ENCODE measurements at regions of chr9 and their contacts with region 1.

Region 1: GRCh38 chr9:127734747-127735529 is at the start of gene TOR2A:
- DNase-seq: peak; percentile 92
- ATAC-seq: peak; percentile 93
- H3K4me3 ChIP-seq: peak within 1 kb of the TSS; percentile 58 to 72
- H3K27ac ChIP-seq: peak within 1 kb of the TSS; percentile 87
- H3K4me1 ChIP-seq: peaks cover 4 to 18% of the 10 kb centered on the region in 2 experiments
- H3K27me3 ChIP-seq: no peaks in the 10 kb centered on the region
- CTCF ChIP-seq: peak in 2 of 3 experiments; percentile 91 to 92; a peak in 4 of 6 replicates
- POLR2A ChIP-seq: no peak
- RAD21 ChIP-seq: no peak
- total RNA-seq, gene TOR2A: 12.0 TPM

Region 2: DNA sequence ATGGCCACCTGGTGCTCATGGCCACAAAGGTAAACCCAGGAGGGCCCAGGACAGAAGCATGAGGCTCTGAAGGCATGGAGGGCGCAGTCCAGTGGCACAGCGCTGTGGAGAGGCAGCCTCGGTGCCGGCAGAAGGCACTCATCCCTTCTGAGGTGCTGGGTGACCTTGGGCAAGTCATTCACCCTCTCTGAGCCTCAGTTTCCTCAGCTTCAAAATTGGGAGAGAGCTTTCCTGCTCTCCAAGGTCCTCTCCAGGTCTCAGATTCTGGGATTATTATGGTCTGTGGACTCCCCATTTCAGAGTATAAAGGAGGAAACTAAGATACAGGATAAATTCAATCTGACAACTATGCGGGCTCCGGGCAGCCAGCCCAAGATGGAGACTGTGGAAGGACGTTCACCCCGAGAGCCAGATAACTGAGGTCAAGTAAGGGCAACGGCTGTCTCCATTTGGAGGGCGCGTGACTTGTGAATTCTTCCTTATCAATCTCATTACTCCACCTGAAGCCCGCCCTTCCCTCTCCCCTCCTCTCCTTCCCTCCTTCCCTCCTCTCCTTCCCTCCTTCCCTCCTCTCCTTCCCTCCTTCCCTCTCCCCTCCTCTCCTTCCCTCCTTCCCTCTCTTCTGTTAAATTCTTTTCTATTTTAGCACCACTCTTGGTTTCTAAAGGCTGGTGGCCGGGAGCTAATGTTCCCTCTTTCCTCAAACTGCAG is 225.5 kb before region 1 on chr9:
- CTCF ChIA-PET with region 1: no interaction called
- POLR2A ChIA-PET with region 1: no interaction called
- RAD21 ChIA-PET with region 1: no interaction called
- intact Hi-C with region 1: no loop called
- DNase-seq: no peak
- ATAC-seq: no peak
- H3K4me3 ChIP-seq: no peak overlapping the region
- H3K27ac ChIP-seq: no peak overlapping the region
- H3K4me1 ChIP-seq: 0 out of 4 replicates have a peak, but pooled peaks cover 0 to 1% of the 10 kb centered on the region in 2 experiments
- H3K27me3 ChIP-seq: no peaks in the 10 kb centered on the region
- CTCF ChIP-seq: no peak
- POLR2A ChIP-seq: no peak
- RAD21 ChIP-seq: no peak

Region 3: GRCh38 chr9:127586537-127586936 is 148.4 kb before region 1 on chr9:
- CTCF ChIA-PET with region 1: interaction called, 46 read pairs
- POLR2A ChIA-PET with region 1: interaction called, 3 read pairs
- RAD21 ChIA-PET with region 1: interaction called, 5 to 10 read pairs
- intact Hi-C with region 1: loop called (anchors 1 kb)
- DNase-seq: no peak
- ATAC-seq: peak; percentile 88
- H3K4me3 ChIP-seq: no peak overlapping the region
- H3K27ac ChIP-seq: no peak overlapping the region
- H3K4me1 ChIP-seq: peaks cover 5 to 24% of the 10 kb centered on the region in 2 experiments; a peak in 3 of 4 replicates
- H3K27me3 ChIP-seq: no peaks in the 10 kb centered on the region
- CTCF ChIP-seq: peak in 2 of 3 experiments; percentile 82 to 87; a peak in 4 of 6 replicates
- POLR2A ChIP-seq: no peak
- RAD21 ChIP-seq: no peak

Region 4: GRCh38 chr9:127707726-127708147 is 27.2 kb before region 1 on chr9:
- CTCF ChIA-PET with region 1: interaction called, 6 read pairs
- POLR2A ChIA-PET with region 1: no interaction called
- RAD21 ChIA-PET with region 1: interaction called, 3 read pairs
- intact Hi-C with region 1: loop called (anchors 1 kb)
- DNase-seq: peak; percentile 43
- ATAC-seq: peak; percentile 80
- H3K4me3 ChIP-seq: no peak overlapping the region
- H3K27ac ChIP-seq: no peak overlapping the region
- H3K4me1 ChIP-seq: peaks cover 6 to 17% of the 10 kb centered on the region in 2 experiments; a peak in 3 of 4 replicates
- H3K27me3 ChIP-seq: no peaks in the 10 kb centered on the region
- CTCF ChIP-seq: peak in 2 of 3 experiments; percentile 42 to 43; a peak in 4 of 6 replicates
- POLR2A ChIP-seq: no peak
- RAD21 ChIP-seq: no peak

Region 5: DNA sequence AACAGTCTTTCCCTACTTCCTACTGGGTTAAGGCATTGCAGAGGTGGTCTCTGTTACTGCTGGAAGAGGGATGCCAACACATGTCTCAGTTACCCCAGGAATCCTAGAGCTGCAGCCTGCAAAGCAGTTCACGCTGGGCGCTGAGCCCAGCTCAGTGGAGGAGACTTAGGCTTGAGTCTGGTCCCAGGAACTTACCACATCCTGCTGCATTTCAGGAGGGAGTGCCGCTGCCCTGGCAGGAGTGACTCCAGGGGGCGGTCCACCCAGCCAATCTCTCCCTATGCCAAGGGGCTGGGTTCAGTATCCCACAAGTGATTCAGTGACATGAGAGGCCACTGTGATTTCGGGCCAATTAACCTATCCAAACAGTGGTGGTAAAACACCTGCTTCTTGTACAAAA is 11.5 kb before region 1 on chr9:
- CTCF ChIA-PET with region 1: interaction called, 23 read pairs
- POLR2A ChIA-PET with region 1: interaction called, 6 read pairs
- RAD21 ChIA-PET with region 1: interaction called in 1 of 2 experiments, 5 read pairs
- intact Hi-C with region 1: no loop called
- DNase-seq: no peak
- ATAC-seq: no peak
- H3K4me3 ChIP-seq: no peak overlapping the region
- H3K27ac ChIP-seq: peak overlapping the region; percentile 50; the same call in 1 of the 2 replicates
- H3K4me1 ChIP-seq: peaks cover 54 to 62% of the 10 kb centered on the region in 2 experiments
- H3K27me3 ChIP-seq: no peaks in the 10 kb centered on the region
- CTCF ChIP-seq: no peak
- POLR2A ChIP-seq: no peak
- RAD21 ChIP-seq: no peak

Region 6: DNA sequence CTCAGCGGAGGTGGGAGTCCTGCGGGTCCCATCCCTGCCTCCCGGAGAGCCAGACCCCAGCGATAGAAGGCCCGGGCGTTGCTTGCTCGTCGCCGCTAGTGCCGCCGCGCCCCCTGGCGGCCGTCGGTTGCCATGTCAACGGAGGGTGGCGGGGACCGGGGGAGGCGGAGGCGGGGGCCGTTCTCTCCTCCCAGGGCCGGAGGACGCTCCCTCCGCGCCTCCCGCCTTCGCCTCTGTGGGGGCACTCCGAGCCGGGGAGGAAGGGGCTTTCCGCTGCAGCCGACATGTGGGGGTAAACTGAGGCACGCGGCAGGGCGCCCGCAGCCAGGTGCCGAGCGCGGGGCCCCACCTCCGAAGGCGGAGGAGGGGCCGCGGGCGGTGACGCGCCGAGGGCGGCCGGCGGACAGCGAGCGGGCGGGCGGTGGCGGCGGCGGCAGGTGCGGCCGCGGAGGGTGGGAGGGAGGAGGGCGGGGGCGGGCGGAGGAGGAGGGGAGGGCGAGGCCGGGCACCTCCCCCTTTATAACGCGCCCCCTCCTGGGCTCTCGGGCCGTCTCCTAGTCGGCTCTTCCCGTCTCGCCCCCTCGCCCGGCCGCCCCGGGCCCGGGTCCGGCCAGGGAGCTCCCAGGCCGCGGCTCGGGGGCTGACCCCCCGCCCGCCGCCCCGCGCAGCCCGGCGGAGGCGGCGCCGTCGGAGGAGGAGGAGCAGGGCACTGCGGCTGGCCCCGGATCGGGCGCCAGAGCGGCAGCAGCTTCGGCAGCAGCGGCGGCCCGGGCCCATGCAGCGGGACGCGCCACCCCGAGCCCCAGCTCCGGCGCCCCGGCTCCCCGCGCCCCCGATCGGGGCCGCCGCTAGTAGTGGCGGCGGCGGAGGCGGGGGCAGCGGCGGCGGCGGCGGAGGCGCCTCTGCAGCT is 50.3 kb after region 1 on chr9:
- CTCF ChIA-PET with region 1: interaction called, 7 read pairs
- POLR2A ChIA-PET with region 1: interaction called, 3 read pairs
- RAD21 ChIA-PET with region 1: interaction called, 4 read pairs
- intact Hi-C with region 1: loop called (anchors 1 kb)
- DNase-seq: peak; percentile 60
- ATAC-seq: peak; percentile 67
- H3K4me3 ChIP-seq: peak overlapping the region; percentile 45 to 90
- H3K27ac ChIP-seq: peak overlapping the region; percentile 98
- H3K4me1 ChIP-seq: peaks cover 11 to 14% of the 10 kb centered on the region in 2 experiments; a peak in 3 of 4 replicates
- H3K27me3 ChIP-seq: no peaks in the 10 kb centered on the region
- CTCF ChIP-seq: peak in 2 of 3 experiments; percentile 75 to 81; a peak in 4 of 6 replicates
- POLR2A ChIP-seq: no peak
- RAD21 ChIP-seq: no peak

Region 7: GRCh38 chr9:127916665-127917613 is 182.0 kb after region 1 on chr9 and contains the start of gene ST6GALNAC4:
- CTCF ChIA-PET with region 1: interaction called, 19 read pairs
- POLR2A ChIA-PET with region 1: interaction called, 4 read pairs
- RAD21 ChIA-PET with region 1: interaction called, 4 to 7 read pairs
- intact Hi-C with region 1: loop called (anchors 1 kb)
- DNase-seq: no peak
- ATAC-seq: peak; percentile 86
- H3K4me3 ChIP-seq: peak within 1 kb of the TSS; percentile 85 to 91
- H3K27ac ChIP-seq: peak within 1 kb of the TSS; percentile 96
- H3K4me1 ChIP-seq: peaks cover 52 to 70% of the 10 kb centered on the region in 2 experiments
- H3K27me3 ChIP-seq: no peaks in the 10 kb centered on the region
- CTCF ChIP-seq: no peak
- POLR2A ChIP-seq: peak; percentile 22
- RAD21 ChIP-seq: no peak
- total RNA-seq, gene ST6GALNAC4: 49.4 TPM

Measured in HCT116 (cell line).